HepG2 (cell line): ENCODE measurements at regions of chr6 and their contacts with region 1.

Region 1: DNA sequence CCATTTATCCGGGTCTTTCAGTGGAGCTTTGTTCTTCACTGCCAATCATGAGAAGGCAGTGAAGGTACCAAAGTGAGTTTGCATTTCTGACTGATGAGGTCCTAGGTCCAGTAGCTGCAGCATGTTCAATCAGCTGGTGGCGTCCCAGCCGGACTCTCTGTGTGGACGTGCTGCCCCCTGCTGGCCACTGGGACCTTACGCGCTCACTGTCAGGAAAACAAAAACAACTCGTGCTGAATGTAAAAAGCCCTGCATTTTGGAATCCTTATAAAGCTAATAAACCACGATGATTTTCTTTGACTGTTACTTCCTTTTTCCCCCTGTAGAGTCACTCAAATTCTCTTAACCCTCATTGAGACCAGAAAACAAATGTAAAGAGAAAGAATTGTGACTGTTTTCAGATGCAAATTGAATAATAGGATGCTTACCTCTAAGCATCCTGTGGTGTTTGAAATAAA is 4.9 kb upstream of the CD24 start:
- DNase-seq: peak; percentile 73
- ATAC-seq: peak; percentile 79
- H3K4me3 ChIP-seq: no peak overlapping the region
- H3K27ac ChIP-seq: no peak overlapping the region
- H3K4me1 ChIP-seq: peaks cover 13% of the 10 kb centered on the region
- H3K27me3 ChIP-seq: peaks cover 0 to 10% of the 10 kb centered on the region in 2 experiments; a peak in 2 of 5 replicates
- CTCF ChIP-seq: peak; percentile 96
- EP300 ChIP-seq: no peak
- POLR2A ChIP-seq: no peak
- RAD21 ChIP-seq: peak; percentile 95

Region 2: DNA sequence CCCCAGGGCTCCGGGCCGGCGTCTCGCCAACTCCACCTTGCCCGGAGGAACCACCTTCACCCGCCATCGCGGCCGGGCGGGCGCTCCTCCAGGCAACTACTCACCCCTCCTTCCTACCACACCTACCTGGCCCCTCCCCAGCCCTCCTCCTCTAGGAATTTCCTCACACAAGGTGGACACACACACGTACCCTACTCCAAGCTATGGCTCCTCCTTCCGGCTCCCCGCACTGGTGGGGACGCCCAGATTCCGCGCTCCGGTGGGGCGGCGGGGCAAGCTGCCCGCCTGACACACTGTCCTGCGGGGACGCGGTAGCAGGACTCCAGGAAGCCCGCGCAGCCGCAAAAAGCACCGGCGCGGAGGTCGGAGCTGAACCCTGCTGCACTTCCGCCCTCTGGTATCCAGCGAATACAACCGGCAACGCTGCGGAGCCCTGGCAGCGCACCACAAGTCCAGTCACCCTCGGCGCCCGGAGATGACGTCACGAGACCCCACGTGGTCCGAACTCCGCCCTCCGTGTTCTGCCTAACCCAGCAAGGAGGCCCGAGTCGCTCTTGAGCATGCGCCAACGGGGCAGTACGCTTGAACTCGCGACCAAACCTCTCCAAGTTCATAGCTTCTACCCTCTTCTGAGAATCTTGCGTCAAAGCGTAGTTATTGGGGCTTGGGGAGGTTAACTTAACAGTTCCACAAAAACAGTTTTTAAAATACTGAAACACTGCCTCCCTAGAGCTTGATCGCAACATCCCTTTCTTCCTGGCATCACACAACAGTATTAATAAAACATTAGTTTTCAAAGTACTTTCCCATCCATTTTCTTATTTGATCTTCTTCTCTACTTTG is 653.9 kb before region 1 on chr6 and contains the start of gene ATG5:
- CTCF ChIA-PET with region 1: no interaction called
- POLR2A ChIA-PET with region 1: no interaction called
- in situ Hi-C with region 1: loop called (anchors 25 kb)
- intact Hi-C with region 1: no loop called
- DNase-seq: peak; percentile 96
- ATAC-seq: peak; percentile 98
- H3K4me3 ChIP-seq: peak within 1 kb of the TSS; percentile 85 to 95 (median 89)
- H3K27ac ChIP-seq: peak within 1 kb of the TSS; percentile 94
- H3K4me1 ChIP-seq: peaks cover 26% of the 10 kb centered on the region
- H3K27me3 ChIP-seq: peaks cover 0 to 26% of the 10 kb centered on the region in 2 experiments; a peak in 3 of 5 replicates
- CTCF ChIP-seq: peak; percentile 43
- EP300 ChIP-seq: peak in 1 of 2 experiments; percentile 50; a peak in 2 of 4 replicates
- POLR2A ChIP-seq: peak; percentile 83 to 90
- RAD21 ChIP-seq: peak; percentile 28; the same call in 1 of the 2 replicates
- total RNA-seq, gene ATG5: 48.0 and 56.8 TPM in 2 replicates

Region 3: GRCh38 chr6:106444777-106445507 is 534.5 kb before region 1 on chr6:
- CTCF ChIA-PET with region 1: interaction called, 18 read pairs
- POLR2A ChIA-PET with region 1: no interaction called
- in situ Hi-C with region 1: loop called (anchors 10 kb)
- intact Hi-C with region 1: loop called (anchors 1 kb)
- DNase-seq: peak; percentile 58
- ATAC-seq: peak; percentile 85
- H3K4me3 ChIP-seq: no peak overlapping the region
- H3K27ac ChIP-seq: no peak overlapping the region
- H3K4me1 ChIP-seq: peaks cover 19% of the 10 kb centered on the region
- H3K27me3 ChIP-seq: no peaks in the 10 kb centered on the region
- CTCF ChIP-seq: peak; percentile 83
- EP300 ChIP-seq: no peak
- POLR2A ChIP-seq: no peak
- RAD21 ChIP-seq: peak; percentile 62

Region 4: DNA sequence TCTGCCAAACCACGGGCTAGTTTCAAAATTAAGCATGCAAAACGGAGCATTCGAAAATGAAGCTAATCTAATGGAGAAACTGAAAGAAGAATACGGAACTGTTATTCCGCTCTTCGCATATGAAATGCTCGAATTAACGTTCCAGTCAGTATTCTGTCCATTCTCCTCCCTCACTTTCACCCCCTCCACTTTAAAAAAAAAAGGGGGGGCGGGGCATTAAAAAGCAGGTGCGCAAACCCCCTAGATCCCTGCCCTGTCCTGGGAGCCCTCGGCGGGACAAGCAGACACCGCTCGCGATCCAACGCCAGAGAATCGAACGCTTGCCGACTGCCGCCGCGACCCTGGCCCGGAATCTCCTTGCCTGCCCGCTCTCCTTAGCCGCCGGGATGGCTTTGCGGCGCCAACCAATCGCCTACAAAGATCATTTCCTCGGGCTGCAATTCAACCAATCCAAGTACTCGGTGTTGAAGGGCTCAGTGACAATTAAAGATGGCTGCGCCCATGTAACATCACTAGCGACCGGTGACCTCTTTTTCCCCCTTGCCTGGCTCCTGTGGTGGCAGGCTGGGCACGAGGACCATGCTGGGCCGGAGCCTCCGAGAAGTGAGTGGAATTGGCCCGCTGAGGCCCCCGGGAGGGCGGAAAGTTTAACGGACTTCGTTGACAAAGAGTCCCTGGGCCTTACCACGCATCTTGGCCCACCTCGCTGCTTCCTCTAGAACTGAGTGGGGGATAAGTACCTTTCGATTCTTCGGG is 350.2 kb before region 1 on chr6 and contains the starts of genes QRSL1 and RTN4IP1:
- CTCF ChIA-PET with region 1: no interaction called
- POLR2A ChIA-PET with region 1: no interaction called
- in situ Hi-C with region 1: no loop called
- intact Hi-C with region 1: loop called (anchors 5 kb)
- DNase-seq: peak; percentile 91
- ATAC-seq: peak; percentile 98
- H3K4me3 ChIP-seq: peak within 1 kb of the TSS; percentile 93 to 99 (median 95)
- H3K27ac ChIP-seq: peak within 1 kb of the TSS; percentile 90
- H3K4me1 ChIP-seq: peaks cover 43% of the 10 kb centered on the region
- H3K27me3 ChIP-seq: peaks cover 0 to 2% of the 10 kb centered on the region in 2 experiments; a peak in 1 of 5 replicates
- CTCF ChIP-seq: no peak
- EP300 ChIP-seq: no peak
- POLR2A ChIP-seq: peak; percentile 64 to 82
- RAD21 ChIP-seq: peak; percentile 19; the same call in 1 of the 2 replicates
- total RNA-seq, gene QRSL1: 22.3 and 24.2 TPM in 2 replicates
- total RNA-seq, gene RTN4IP1: 17.2 and 25.2 TPM in 2 replicates

Region 5: GRCh38 chr6:106804346-106805335 is 174.8 kb before region 1 on chr6:
- CTCF ChIA-PET with region 1: interaction called, 16 read pairs
- POLR2A ChIA-PET with region 1: no interaction called
- in situ Hi-C with region 1: loop called (anchors 10 kb)
- intact Hi-C with region 1: loop called (anchors 1 kb)
- DNase-seq: no peak
- ATAC-seq: no peak
- H3K4me3 ChIP-seq: no peak overlapping the region
- H3K27ac ChIP-seq: no peak overlapping the region
- H3K4me1 ChIP-seq: peaks cover 43% of the 10 kb centered on the region
- H3K27me3 ChIP-seq: no peaks in the 10 kb centered on the region; a peak in 1 of 5 replicates
- CTCF ChIP-seq: no peak
- EP300 ChIP-seq: no peak
- POLR2A ChIP-seq: no peak
- RAD21 ChIP-seq: no peak